ENCODE measurements at regions of chr2 and their contacts with region 1.

Region 1: GRCh38 chr2:135985018-135985825 is at the start of gene DARS1:
- DNase-seq: peak; percentile 95
- H3K4me3 Mint-ChIP-seq: peak within 1 kb of the TSS; percentile 93
- H3K27ac Mint-ChIP-seq: peak within 1 kb of the TSS; percentile 100
- H3K4me1 Mint-ChIP-seq: peaks cover 48% of the 10 kb centered on the region
- H3K27me3 Mint-ChIP-seq: no peaks in the 10 kb centered on the region
- total RNA-seq, gene DARS1: 153 and 160 TPM in 2 replicates

Region 2: GRCh38 chr2:135741395-135742324 is 243.6 kb before region 1 on chr2 and contains the start of gene UBXN4:
- intact Hi-C with region 1: loop called (anchors 1 kb)
- DNase-seq: peak; percentile 96
- H3K4me3 Mint-ChIP-seq: peak within 1 kb of the TSS; percentile 99
- H3K27ac Mint-ChIP-seq: peak within 1 kb of the TSS; percentile 100
- H3K4me1 Mint-ChIP-seq: peaks cover 36% of the 10 kb centered on the region
- H3K27me3 Mint-ChIP-seq: no peaks in the 10 kb centered on the region
- total RNA-seq, gene UBXN4: 116 and 127 TPM in 2 replicates

Region 3: DNA sequence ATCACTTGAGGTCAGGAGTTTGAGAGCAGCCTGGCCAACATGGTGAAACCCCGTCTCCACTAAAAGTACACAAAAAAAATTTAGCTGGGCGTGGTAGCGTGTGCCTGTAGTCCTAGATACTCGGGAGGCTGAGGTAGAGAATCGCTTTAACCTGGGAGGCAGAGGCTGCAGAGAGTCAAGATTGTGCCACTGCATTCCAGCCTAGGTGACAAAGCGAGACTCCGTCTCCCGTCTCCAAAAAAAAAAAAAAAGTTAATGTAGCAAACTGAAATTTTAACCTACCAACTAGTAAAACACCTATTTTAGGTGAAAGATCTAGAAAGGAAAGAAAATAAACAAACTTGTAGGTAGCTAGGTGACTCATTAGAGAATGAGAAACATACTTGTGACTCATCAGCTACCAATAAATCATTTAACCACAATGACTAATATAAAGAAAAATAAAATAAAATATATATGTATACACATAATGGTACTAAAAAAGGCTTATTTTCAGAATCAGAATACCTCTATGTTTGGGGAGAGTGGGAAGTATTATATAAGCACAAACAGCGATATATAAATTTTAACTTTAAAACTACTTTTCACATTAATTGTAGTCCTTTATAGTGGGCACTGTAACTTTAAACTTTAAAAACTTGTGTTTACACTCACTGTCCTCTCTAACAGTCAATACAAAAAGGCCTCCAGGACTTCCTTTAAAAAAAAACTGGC is 36.4 kb before region 1 on chr2:
- intact Hi-C with region 1: loop called (anchors 1 kb)
- DNase-seq: peak; percentile 71
- H3K4me3 Mint-ChIP-seq: peak overlapping the region; percentile 60
- H3K27ac Mint-ChIP-seq: peak overlapping the region; percentile 94
- H3K4me1 Mint-ChIP-seq: peaks cover 51% of the 10 kb centered on the region
- H3K27me3 Mint-ChIP-seq: no peaks in the 10 kb centered on the region

Region 4: GRCh38 chr2:136051001-136051724 is 65.9 kb after region 1 on chr2:
- intact Hi-C with region 1: loop called (anchors 1 kb)
- DNase-seq: peak; percentile 79
- H3K4me3 Mint-ChIP-seq: peak overlapping the region; percentile 74
- H3K27ac Mint-ChIP-seq: peak overlapping the region; percentile 94
- H3K4me1 Mint-ChIP-seq: peaks cover 78% of the 10 kb centered on the region
- H3K27me3 Mint-ChIP-seq: no peaks in the 10 kb centered on the region

Region 5: DNA sequence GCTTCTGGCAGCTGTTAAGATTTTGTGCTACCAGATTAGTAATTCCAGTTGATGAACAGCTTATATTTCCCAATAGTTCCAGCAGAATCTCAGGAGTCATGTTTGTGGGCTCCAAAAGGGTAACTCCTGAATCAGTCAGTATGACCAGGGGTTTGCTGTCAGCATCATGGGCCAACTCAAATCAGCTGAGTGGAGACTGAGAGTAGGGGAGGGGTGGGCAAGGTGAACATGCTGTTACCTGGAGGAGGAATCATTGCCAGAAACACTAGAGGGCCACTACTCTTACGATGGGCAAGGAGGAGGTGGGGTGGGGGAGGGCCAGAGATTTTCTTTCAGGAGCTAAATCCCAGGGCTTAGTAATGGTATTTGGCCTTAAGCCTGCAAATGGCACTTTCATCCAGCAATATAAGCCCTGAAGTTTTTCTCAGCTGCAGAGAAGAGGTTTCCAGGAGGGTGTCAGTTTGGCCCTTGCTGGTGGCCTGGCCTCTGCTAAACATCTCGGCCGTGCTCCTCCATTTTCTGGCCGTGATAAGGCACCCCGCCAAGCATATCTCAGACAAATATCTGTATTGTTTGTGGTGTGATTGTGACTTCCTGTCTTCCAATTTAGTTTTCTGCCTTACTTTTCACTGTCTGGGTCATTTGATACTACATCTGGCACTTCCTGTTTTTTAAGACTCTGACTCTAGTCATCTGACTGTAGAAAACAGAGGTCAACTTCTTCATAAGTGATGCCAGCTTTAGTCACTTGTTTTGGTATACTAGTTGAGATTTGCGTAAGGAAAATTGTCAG is 253.3 kb after region 1 on chr2:
- intact Hi-C with region 1: loop called (anchors 2 kb)
- DNase-seq: peak; percentile 81
- H3K4me3 Mint-ChIP-seq: peak overlapping the region; percentile 43
- H3K27ac Mint-ChIP-seq: peak overlapping the region; percentile 89
- H3K4me1 Mint-ChIP-seq: peaks cover 45% of the 10 kb centered on the region
- H3K27me3 Mint-ChIP-seq: no peaks in the 10 kb centered on the region

Measured in activated CD4-positive, alpha-beta T cell treated with anti-CD3 and anti-CD28 coated beads, Interleukin-2, amount 10 ng/mL, durations not matched to agents 24 days and 14 days (primary cell).